AG04449 (cell line): ENCODE measurements at regions of chr12 and their contacts with region 1.

Region 1: GRCh38 chr12:103868215-103868614 is 27.2 kb upstream of the NT5DC3 start:
- DNase-seq: peak; percentile 33
- H3K4me3 ChIP-seq: no peak overlapping the region
- CTCF ChIP-seq: no peak

Region 2: DNA sequence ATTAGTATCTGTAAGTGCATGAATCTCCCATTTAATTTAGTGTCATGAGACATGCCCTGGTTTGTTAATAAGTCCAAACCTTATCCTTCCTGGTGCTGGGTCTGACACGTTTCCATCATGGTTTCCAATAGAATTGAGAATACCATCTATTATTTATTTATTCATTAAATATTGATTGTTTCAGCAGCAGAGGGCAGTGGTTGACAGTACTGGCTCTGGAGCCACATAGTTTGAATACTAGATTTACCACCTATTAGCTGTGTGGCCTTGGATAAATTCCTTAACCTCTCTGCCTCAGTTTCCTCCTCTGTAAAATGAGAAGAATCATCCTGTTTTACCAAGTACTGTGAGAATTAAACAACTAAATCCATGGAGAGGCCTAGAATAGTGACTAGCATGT is 282.1 kb before region 1 on chr12:
- CTCF ChIA-PET with region 1: interaction called, 26 read pairs
- POLR2A ChIA-PET with region 1: no interaction called
- DNase-seq: no peak
- H3K4me3 ChIP-seq: no peak overlapping the region
- CTCF ChIP-seq: no peak

Region 3: DNA sequence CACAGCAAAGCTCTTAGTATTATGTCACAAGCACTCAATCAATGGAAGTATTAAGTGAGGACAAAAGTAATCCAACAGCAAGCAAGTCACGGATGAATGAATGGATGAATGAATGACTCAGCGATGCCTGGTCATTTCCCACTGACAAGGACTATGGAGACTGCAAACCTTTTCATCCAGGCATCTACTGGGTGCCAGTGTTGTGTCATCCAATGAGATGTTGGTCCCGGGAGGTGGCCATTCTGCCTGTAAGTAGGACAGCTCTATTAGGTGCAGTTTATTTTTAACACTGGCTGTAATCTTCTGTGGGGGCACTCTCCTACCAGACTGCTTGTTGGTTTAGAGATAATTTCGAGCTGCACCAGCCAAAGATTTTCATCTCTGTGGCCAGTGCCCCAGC is 241.7 kb before region 1 on chr12:
- CTCF ChIA-PET with region 1: interaction called, 24 read pairs
- POLR2A ChIA-PET with region 1: no interaction called
- DNase-seq: peak; percentile 28
- H3K4me3 ChIP-seq: no peak overlapping the region
- CTCF ChIP-seq: peak; percentile 12